WTC11 (cell line): ENCODE measurements at regions of chr1 and their contacts with region 1.

Region 1: GRCh38 chr1:14113841-14114567 is 414.0 kb downstream of the PRDM2 start:
- DNase-seq: peak; percentile 80
- ATAC-seq: peak; percentile 97
- H3K4me3 Mint-ChIP-seq: no peak overlapping the region
- H3K27ac Mint-ChIP-seq: no peak overlapping the region
- H3K4me1 Mint-ChIP-seq: peaks cover 15% of the 10 kb centered on the region
- H3K27me3 Mint-ChIP-seq: no peaks in the 10 kb centered on the region; the same call in 1 of the 2 replicates
- CTCF ChIP-seq: peak; percentile 41; the same call in 1 of the 2 replicates

Region 2: DNA sequence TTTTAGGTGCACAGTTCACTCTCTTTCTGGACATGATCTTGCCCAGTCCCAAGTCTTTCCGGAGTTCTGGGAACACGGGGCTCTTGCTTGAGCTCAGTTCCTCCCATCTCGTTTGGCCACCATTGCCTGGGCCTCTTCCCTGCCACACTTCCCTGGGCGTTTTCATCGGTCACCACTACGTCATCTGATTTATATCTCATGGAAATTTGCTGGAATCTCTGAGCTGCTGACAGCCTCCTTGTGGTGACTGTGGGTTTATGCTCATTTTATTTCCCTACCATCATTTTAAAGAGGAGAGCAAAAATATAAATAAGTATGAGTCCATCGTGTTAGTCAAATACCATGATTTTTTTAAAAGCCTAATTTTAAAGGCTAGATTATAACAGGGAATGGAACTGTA is 35.4 kb after region 1 on chr1:
- CTCF ChIA-PET with region 1: interaction called, 21 read pairs
- POLR2A ChIA-PET with region 1: no interaction called
- DNase-seq: no peak
- ATAC-seq: peak; percentile 36; the same call in 1 of the 2 replicates
- H3K4me3 Mint-ChIP-seq: no peak overlapping the region
- H3K27ac Mint-ChIP-seq: no peak overlapping the region
- H3K4me1 Mint-ChIP-seq: 0 out of 2 replicates have a peak, but pooled peaks cover 5% of the 10 kb centered on the region
- H3K27me3 Mint-ChIP-seq: peaks cover 2% of the 10 kb centered on the region; the same call in 1 of the 2 replicates
- CTCF ChIP-seq: no peak

Region 3: GRCh38 chr1:14415395-14415794 is 301.4 kb after region 1 on chr1:
- CTCF ChIA-PET with region 1: interaction called, 31 read pairs
- POLR2A ChIA-PET with region 1: no interaction called
- DNase-seq: peak; percentile 77
- ATAC-seq: peak; percentile 98
- H3K4me3 Mint-ChIP-seq: no peak overlapping the region
- H3K27ac Mint-ChIP-seq: no peak overlapping the region
- H3K4me1 Mint-ChIP-seq: peaks cover 4% of the 10 kb centered on the region
- H3K27me3 Mint-ChIP-seq: peaks cover 7% of the 10 kb centered on the region
- CTCF ChIP-seq: peak; percentile 28; the same call in 1 of the 2 replicates

Region 4: DNA sequence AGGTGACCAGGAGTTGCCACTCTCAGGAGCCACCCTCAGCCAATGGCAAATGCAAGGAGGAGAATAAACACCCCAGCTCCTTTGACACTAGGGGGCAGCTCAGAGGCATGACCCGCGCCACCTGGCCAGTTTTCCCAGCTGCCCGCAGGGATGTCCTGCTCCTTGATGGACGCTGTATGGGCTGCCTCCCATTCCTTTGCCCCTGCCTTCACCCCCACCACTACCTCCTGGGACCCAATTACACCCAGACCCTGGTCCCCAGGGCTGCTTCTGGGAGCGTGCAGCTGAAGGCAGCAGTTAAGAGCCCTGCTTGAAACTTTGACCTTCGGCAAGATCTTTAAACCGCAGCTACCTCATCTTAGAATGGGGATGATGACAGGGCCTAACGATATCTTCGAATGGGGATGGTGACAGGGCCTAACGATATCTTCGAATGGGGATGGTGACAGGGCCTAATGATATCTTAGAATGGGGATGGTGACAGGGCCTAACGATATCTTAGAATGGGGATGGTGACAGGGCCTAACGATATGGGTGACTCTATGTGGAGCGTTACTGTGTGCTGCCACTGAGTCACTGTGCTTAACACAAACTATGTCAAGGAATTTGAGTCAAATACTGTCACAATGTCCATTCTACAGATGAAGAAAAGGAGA is 321.5 kb after region 1 on chr1:
- CTCF ChIA-PET with region 1: interaction called, 21 read pairs
- POLR2A ChIA-PET with region 1: no interaction called
- DNase-seq: peak; percentile 72
- ATAC-seq: peak; percentile 97
- H3K4me3 Mint-ChIP-seq: no peak overlapping the region
- H3K27ac Mint-ChIP-seq: no peak overlapping the region
- H3K4me1 Mint-ChIP-seq: no peaks in the 10 kb centered on the region
- H3K27me3 Mint-ChIP-seq: peaks cover 11% of the 10 kb centered on the region
- CTCF ChIP-seq: peak; percentile 50